Dendritic cell treated with granulocyte-macrophage colony-stimulating factor and Interleukin-4, amounts not matched to agents 40 ng/mL and 50 ng/mL, for 4 days (primary cell): ENCODE measurements at regions of chr10 and their contacts with region 1.

Region 1: GRCh38 chr10:113521123-113521795 is 31.6 kb upstream of the HABP2 start:
- H3K4me3 Mint-ChIP-seq: no peak overlapping the region
- H3K27ac Mint-ChIP-seq: no peak overlapping the region
- H3K4me1 Mint-ChIP-seq: no peaks in the 10 kb centered on the region
- H3K27me3 Mint-ChIP-seq: peaks cover 24% of the 10 kb centered on the region

Region 2: DNA sequence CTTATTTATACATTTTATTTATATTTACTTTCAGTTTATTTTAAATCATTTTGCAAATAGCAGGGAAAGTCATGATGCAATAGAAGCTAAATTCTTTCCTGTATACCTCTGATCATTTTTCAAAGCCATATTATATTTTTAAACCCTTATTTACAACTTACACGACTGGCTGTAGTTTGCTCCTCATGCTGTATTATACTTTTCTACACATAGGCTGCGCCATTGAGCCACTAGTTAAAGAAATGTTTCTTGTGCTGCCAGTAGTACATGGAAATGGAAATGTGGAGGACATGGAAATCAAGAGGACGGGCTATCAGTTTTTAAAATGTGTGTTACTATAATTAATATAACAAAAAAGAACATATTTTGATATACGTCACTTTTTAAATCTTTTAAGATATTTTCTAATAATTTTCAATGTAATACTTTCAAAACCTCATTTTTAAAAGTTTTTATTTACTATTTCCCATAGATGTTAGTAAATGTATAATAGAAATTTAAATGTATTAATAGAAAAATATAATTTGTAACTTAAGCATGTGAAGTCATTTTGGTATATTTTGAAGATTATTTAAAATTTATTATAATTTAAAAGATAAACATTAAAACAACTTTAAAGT is 955.7 kb before region 1 on chr10:
- intact Hi-C with region 1: loop called (anchors 5 kb)
- H3K4me3 Mint-ChIP-seq: no peak overlapping the region
- H3K27ac Mint-ChIP-seq: no peak overlapping the region
- H3K4me1 Mint-ChIP-seq: no peaks in the 10 kb centered on the region
- H3K27me3 Mint-ChIP-seq: no peaks in the 10 kb centered on the region

Region 3: GRCh38 chr10:113539789-113540188 is 18.5 kb after region 1 on chr10:
- intact Hi-C with region 1: no loop called
- H3K4me3 Mint-ChIP-seq: no peak overlapping the region
- H3K27ac Mint-ChIP-seq: no peak overlapping the region
- H3K4me1 Mint-ChIP-seq: peaks cover 18% of the 10 kb centered on the region
- H3K27me3 Mint-ChIP-seq: peaks cover 13% of the 10 kb centered on the region

Region 4: DNA sequence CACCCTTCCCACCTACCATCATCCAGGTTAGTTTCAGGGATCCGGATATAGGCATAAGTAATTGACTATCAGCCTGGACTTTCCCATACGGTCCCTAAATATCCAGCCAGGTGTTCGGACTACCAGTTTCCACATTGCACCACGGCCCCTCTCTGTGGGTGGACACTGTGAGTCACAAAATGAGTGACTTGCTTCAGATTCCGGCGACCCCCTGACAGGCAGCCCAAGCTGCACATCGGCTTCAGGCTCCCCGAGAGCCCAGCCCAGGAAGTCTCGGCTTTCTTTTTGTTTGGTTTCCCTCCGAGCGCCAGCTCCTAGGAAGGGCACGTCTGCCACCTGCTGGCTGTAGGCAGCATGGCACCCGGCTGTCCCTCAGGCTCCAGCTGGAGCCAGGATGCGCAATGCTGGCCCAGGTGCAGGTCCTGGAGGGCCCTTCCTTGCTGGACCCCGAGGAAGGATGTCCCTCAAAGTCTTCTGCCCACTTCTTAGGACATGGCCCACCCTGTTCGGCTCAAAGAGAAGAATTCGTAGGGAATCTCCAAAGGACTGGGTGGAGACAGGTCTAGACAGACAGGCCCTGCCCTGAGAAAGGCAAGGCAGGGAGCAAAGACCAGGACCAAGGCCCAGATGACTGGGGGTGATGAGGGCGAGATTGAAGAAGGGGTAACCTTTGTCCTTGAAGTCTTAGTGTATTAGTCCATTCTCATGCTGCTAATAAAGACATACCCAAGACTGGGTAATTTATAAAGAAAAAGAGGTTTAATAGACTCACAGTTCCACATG is 42.2 kb after region 1 on chr10:
- intact Hi-C with region 1: loop called (anchors 5 kb)
- H3K4me3 Mint-ChIP-seq: peak overlapping the region; percentile 74
- H3K27ac Mint-ChIP-seq: peak overlapping the region; percentile 2
- H3K4me1 Mint-ChIP-seq: peaks cover 5% of the 10 kb centered on the region
- H3K27me3 Mint-ChIP-seq: peaks cover 35% of the 10 kb centered on the region